BJ (cell line): ENCODE measurements at regions of chr22 and their contacts with region 1.

Region 1: DNA sequence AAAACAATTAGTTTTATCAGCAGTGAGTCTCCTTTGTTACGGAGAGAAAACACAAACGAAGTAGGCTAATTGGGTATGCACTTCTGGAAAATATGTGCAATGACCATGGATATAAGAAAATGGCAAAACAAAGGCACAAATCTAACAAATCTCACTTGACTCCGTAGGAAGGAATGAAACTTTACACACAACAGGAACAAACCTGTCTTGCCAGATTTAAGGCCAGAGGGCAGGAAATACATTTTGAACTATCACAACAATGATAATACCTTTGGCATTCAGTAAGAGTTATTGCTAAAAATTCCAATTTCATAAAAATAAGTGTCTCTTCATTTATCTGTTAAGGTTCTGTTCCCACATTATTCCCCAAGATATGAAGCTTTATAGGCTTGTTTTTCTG is 36.6 kb downstream of the SLC25A17 start:
- DNase-seq: no peak
- H3K4me3 ChIP-seq: no peak overlapping the region
- H3K27me3 ChIP-seq: no peaks in the 10 kb centered on the region
- CTCF ChIP-seq: no peak

Region 2: DNA sequence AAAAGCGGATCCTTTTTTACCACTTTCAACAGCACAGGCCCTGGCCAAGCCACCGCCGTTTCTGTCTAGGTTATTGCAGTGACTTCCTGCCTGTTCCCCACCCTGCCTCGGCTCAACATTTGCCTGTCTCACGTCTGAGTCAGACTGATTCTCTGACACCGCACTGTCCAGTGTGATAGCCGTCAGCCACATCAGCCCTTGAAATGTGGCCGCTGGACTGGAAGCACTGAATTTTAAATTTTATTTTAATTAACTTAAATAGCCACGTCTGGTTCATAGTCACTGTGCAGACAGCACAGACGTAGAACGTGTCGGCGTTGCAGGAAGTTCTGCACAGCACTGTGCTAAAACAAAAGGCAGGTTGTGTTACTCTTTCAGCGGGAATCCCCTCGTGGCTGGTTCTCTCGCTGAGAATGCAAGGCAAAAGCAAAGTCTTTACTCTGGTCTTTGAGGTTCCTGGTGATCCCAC is 492.5 kb before region 1 on chr22:
- CTCF ChIA-PET with region 1: no interaction called
- POLR2A ChIA-PET with region 1: interaction called, 12 read pairs
- DNase-seq: no peak
- H3K4me3 ChIP-seq: no peak overlapping the region
- H3K27me3 ChIP-seq: no peaks in the 10 kb centered on the region
- CTCF ChIP-seq: no peak